Panc1 (cell line): ENCODE measurements at regions of chr12 and their contacts with region 1.

Region 1: GRCh38 chr12:70383484-70383883 is 17.4 kb downstream of the KCNMB4 start:
- DNase-seq: no peak
- ATAC-seq: no peak
- H3K4me3 ChIP-seq: no peak overlapping the region
- H3K27ac ChIP-seq: no peak overlapping the region
- H3K4me1 ChIP-seq: no peaks in the 10 kb centered on the region
- H3K27me3 ChIP-seq: no peaks in the 10 kb centered on the region
- CTCF ChIP-seq: no peak

Region 2: GRCh38 chr12:70393787-70394499 is 10.5 kb after region 1 on chr12:
- CTCF ChIA-PET with region 1: no interaction called
- POLR2A ChIA-PET with region 1: no interaction called
- in situ Hi-C with region 1: no loop called
- intact Hi-C with region 1: loop called (anchors 1 kb)
- DNase-seq: no peak
- ATAC-seq: no peak
- H3K4me3 ChIP-seq: no peak overlapping the region
- H3K27ac ChIP-seq: no peak overlapping the region
- H3K4me1 ChIP-seq: no peaks in the 10 kb centered on the region
- H3K27me3 ChIP-seq: no peaks in the 10 kb centered on the region
- CTCF ChIP-seq: no peak